Heart left ventricle (tissue), 16 donors: ENCODE measurements at regions of chr9 and their contacts with region 1.

Region 1: DNA sequence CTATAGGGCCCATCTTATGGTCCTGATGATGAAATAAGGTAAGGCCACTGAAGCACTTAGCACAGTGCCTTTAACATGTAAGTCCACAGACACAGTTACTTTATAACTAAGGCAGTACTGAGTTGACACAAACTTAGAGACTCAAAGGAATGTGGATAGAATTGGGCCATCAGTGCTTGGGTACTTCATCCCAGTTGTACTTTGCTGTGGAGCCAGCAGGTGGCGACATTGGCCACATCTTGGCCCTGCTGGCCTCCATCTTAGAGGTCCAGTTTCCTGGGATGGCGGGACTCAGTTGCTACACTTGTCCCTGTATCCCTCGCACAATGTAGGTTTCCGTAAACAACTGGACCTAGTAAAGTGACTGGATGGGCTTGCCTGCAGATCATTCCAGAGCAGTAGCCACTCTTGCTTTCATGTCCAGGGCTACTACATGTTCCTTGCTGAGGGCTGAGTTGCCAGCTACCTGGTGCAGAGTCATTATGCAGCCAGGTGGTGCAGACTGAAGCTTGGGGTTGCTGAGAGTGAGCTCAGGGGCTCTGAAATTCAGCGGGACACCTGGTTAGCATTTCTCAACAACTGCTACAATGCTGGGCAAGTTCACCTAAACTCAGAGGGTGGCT is 10.6 kb downstream of the MTAP start:
- DNase-seq: peak; percentile 40 to 82 (median 64)
- ATAC-seq: peak; percentile 37 to 76 (median 66)
- H3K4me3 ChIP-seq: no peak overlapping the region
- H3K27ac ChIP-seq: peak overlapping the region in 6 of 12 donors; percentile 3 to 46 (median 24)
- H3K4me1 ChIP-seq: peaks cover 0 to 51% (median 24%) of the 10 kb centered on the region in 12 donors
- H3K27me3 ChIP-seq: no peaks in the 10 kb centered on the region
- CTCF ChIP-seq: peak; percentile 66 to 87 (median 79)
- POLR2A ChIP-seq: no peak

Region 2: GRCh38 chr9:21995177-21996086 is 182.4 kb after region 1 on chr9:
- intact Hi-C with region 1: loop called in 5 of 10 experiments (anchors 10 kb)
- DNase-seq: peak; percentile 72 to 89 (median 77)
- ATAC-seq: peak; percentile 65 to 92 (median 87)
- H3K4me3 ChIP-seq: peak overlapping the region; percentile 61 to 95 (median 83)
- H3K27ac ChIP-seq: peak overlapping the region in 11 of 12 donors; percentile 57 to 98 (median 74)
- H3K4me1 ChIP-seq: peaks cover 0 to 27% (median 5%) of the 10 kb centered on the region in 12 donors
- H3K27me3 ChIP-seq: peaks cover 4 to 35% (median 25%) of the 10 kb centered on the region in 9 donors
- CTCF ChIP-seq: peak in 8 of 12 donors; percentile 10 to 44 (median 19)
- POLR2A ChIP-seq: no peak

Region 3: GRCh38 chr9:22037954-22038690 is 225.1 kb after region 1 on chr9:
- intact Hi-C with region 1: loop called in 9 of 10 experiments (anchors 2 to 10 kb)
- DNase-seq: no peak
- ATAC-seq: no peak
- H3K4me3 ChIP-seq: no peak overlapping the region
- H3K27ac ChIP-seq: no peak overlapping the region
- H3K4me1 ChIP-seq: peaks cover 0 to 10% (median 0%) of the 10 kb centered on the region in 12 donors
- H3K27me3 ChIP-seq: no peaks in the 10 kb centered on the region
- CTCF ChIP-seq: peak; percentile 23 to 66 (median 51)
- POLR2A ChIP-seq: no peak

Region 4: GRCh38 chr9:22238809-22239684 is 426.0 kb after region 1 on chr9:
- intact Hi-C with region 1: loop called (anchors 2 to 5 kb)
- DNase-seq: no peak
- ATAC-seq: peak in 1 of 4 donors; percentile 53
- H3K4me3 ChIP-seq: no peak overlapping the region
- H3K27ac ChIP-seq: no peak overlapping the region
- H3K4me1 ChIP-seq: peaks cover 0 to 6% (median 0%) of the 10 kb centered on the region in 12 donors
- H3K27me3 ChIP-seq: no peaks in the 10 kb centered on the region
- CTCF ChIP-seq: peak in 11 of 12 donors; percentile 28 to 56 (median 49)
- POLR2A ChIP-seq: no peak

Region 5: GRCh38 chr9:22446950-22447617 is 634.0 kb after region 1 on chr9:
- intact Hi-C with region 1: loop called in 8 of 10 experiments (anchors 5 to 10 kb)
- DNase-seq: peak; percentile 35 to 75 (median 67)
- ATAC-seq: peak; percentile 72 to 92 (median 84)
- H3K4me3 ChIP-seq: peak overlapping the region; percentile 48 to 75 (median 64)
- H3K27ac ChIP-seq: peak overlapping the region; percentile 28 to 92 (median 81)
- H3K4me1 ChIP-seq: peaks cover 0 to 22% (median 0%) of the 10 kb centered on the region in 12 donors
- H3K27me3 ChIP-seq: peaks cover 0 to 36% (median 0%) of the 10 kb centered on the region in 9 donors
- CTCF ChIP-seq: peak in 5 of 12 donors; percentile 6 to 33 (median 22)
- POLR2A ChIP-seq: no peak